ENCODE measurements at regions of chr19 and their contacts with region 1.

Region 1: GRCh38 chr19:29694669-29695627 is 20.1 kb downstream of the C19orf12 start:
- DNase-seq: peak; percentile 75 to 87 (median 78)
- H3K4me3 ChIP-seq: no peak overlapping the region
- H3K4me3 Mint-ChIP-seq: no peak overlapping the region
- H3K27ac ChIP-seq: no peak overlapping the region
- H3K27ac Mint-ChIP-seq: peak overlapping the region; percentile 37 to 88 (median 72)
- H3K4me1 ChIP-seq: peaks cover 13% of the 10 kb centered on the region
- H3K4me1 Mint-ChIP-seq: peaks cover 13 to 21% (median 15%) of the 10 kb centered on the region in 3 donors
- H3K27me3 ChIP-seq: no peaks in the 10 kb centered on the region
- H3K27me3 Mint-ChIP-seq: no peaks in the 10 kb centered on the region

Region 2: DNA sequence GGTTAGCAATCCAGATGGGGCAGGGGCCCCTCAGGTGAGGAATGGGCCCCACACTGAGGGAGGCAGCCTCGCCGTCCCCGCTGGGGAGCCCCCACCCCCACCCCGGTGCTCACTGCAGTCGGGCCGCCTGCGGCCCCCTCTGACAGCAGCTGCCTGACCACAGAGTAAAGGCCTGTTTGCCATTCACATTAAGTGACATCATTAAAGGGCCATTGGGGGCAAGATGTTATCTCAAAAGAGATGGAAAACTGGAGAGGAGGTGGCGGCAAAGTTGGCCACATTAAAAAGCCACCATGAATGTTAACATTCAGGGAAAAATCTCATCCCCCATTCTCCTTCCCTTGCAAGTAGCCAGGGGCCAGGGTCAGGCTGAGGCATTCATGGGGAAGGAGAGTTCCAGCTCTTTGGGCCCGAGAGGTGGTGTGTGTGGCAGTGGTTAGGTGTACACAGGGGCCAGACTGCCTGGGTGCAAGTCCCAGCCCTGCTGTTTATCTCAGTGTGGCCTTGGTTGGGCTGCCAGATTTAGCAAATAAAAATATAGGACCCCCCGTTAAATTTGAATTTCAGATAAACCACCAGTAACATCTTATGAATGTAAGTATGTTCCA is 148.3 kb before region 1 on chr19:
- CTCF ChIA-PET with region 1: no interaction called
- POLR2A ChIA-PET with region 1: no interaction called
- DNase-seq: no peak
- H3K4me3 ChIP-seq: no peak overlapping the region
- H3K4me3 Mint-ChIP-seq: no peak overlapping the region
- H3K27ac ChIP-seq: no peak overlapping the region
- H3K27ac Mint-ChIP-seq: no peak overlapping the region
- H3K4me1 ChIP-seq: no peaks in the 10 kb centered on the region
- H3K4me1 Mint-ChIP-seq: no peaks in the 10 kb centered on the region
- H3K27me3 ChIP-seq: no peaks in the 10 kb centered on the region
- H3K27me3 Mint-ChIP-seq: peaks cover 10 to 28% of the 10 kb centered on the region in 2 donors

Region 3: GRCh38 chr19:29610563-29611271 is 84.2 kb before region 1 on chr19:
- CTCF ChIA-PET with region 1: interaction called, 119 read pairs
- POLR2A ChIA-PET with region 1: interaction called, 4 read pairs
- DNase-seq: peak; percentile 74 to 91 (median 77)
- H3K4me3 ChIP-seq: no peak overlapping the region
- H3K4me3 Mint-ChIP-seq: peak overlapping the region in 4 of 7 donors; percentile 32 to 85 (median 64)
- H3K27ac ChIP-seq: no peak overlapping the region
- H3K27ac Mint-ChIP-seq: peak overlapping the region; percentile 47 to 91 (median 87)
- H3K4me1 ChIP-seq: peaks cover 23% of the 10 kb centered on the region
- H3K4me1 Mint-ChIP-seq: peaks cover 25 to 50% (median 33%) of the 10 kb centered on the region in 3 donors
- H3K27me3 ChIP-seq: no peaks in the 10 kb centered on the region
- H3K27me3 Mint-ChIP-seq: no peaks in the 10 kb centered on the region

Region 4: DNA sequence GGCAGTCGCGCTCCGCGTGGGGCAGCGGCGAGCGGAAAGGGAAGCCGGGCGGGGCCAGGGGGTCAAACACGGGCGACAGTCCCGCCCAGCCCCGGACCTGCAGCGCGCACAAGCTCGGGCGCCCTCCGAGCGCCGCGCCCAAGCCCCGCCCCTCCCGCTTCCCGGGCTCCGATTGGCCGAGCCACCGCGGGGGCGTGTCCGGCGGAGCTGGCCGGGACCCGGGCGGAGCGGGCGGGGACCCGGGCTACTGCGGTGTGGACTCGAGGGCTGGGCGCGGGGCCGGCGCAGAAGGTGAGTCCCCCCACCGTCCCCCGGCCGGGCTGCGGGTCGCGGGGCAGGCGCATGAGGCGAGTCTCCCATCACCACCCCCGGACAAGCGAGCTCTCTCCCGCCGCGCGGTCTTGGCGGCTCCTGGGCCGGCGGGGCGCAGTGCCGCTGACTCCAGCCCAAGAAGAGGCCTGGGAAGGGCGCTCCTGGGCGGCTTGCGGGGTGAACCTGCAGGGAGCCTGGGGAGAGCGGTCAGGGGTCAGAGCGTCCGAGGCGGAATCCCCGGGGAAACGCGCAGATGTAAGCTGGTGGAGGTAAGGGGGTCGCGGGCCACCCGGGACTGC is 29.6 kb before region 1 on chr19 and contains the start of gene PLEKHF1:
- CTCF ChIA-PET with region 1: interaction called, 48 read pairs
- POLR2A ChIA-PET with region 1: interaction called, 3 read pairs
- DNase-seq: peak; percentile 81 to 85 (median 82)
- H3K4me3 ChIP-seq: peak within 1 kb of the TSS; percentile 91
- H3K4me3 Mint-ChIP-seq: peak within 1 kb of the TSS; percentile 88 to 98 (median 93)
- H3K27ac ChIP-seq: peak within 1 kb of the TSS; percentile 69
- H3K27ac Mint-ChIP-seq: peak within 1 kb of the TSS; percentile 89 to 100 (median 98)
- H3K4me1 ChIP-seq: peaks cover 50% of the 10 kb centered on the region
- H3K4me1 Mint-ChIP-seq: peaks cover 37 to 43% (median 42%) of the 10 kb centered on the region in 3 donors
- H3K27me3 ChIP-seq: no peaks in the 10 kb centered on the region
- H3K27me3 Mint-ChIP-seq: no peaks in the 10 kb centered on the region
- total RNA-seq, gene PLEKHF1: 21.3 to 23.0 TPM

Region 5: GRCh38 chr19:29680447-29680846 is 14.5 kb before region 1 on chr19:
- CTCF ChIA-PET with region 1: interaction called, 14 read pairs
- POLR2A ChIA-PET with region 1: interaction called, 3 read pairs
- DNase-seq: peak; percentile 79 to 90 (median 86)
- H3K4me3 ChIP-seq: peak overlapping the region; percentile 50
- H3K4me3 Mint-ChIP-seq: peak overlapping the region; percentile 26 to 83 (median 78)
- H3K27ac ChIP-seq: peak overlapping the region; percentile 25
- H3K27ac Mint-ChIP-seq: peak overlapping the region; percentile 81 to 97 (median 94)
- H3K4me1 ChIP-seq: peaks cover 73% of the 10 kb centered on the region
- H3K4me1 Mint-ChIP-seq: peaks cover 64 to 81% (median 75%) of the 10 kb centered on the region in 3 donors
- H3K27me3 ChIP-seq: no peaks in the 10 kb centered on the region
- H3K27me3 Mint-ChIP-seq: no peaks in the 10 kb centered on the region

Region 6: GRCh38 chr19:29724102-29724641 is 29.2 kb after region 1 on chr19:
- CTCF ChIA-PET with region 1: interaction called, 11 read pairs
- POLR2A ChIA-PET with region 1: no interaction called
- DNase-seq: peak in 1 of 5 donors; percentile 52
- H3K4me3 ChIP-seq: no peak overlapping the region
- H3K4me3 Mint-ChIP-seq: peak overlapping the region; percentile 38 to 83 (median 68)
- H3K27ac ChIP-seq: no peak overlapping the region
- H3K27ac Mint-ChIP-seq: peak overlapping the region in 2 of 8 donors; percentile 11 to 23
- H3K4me1 ChIP-seq: no peaks in the 10 kb centered on the region
- H3K4me1 Mint-ChIP-seq: peaks cover 6 to 17% (median 12%) of the 10 kb centered on the region in 3 donors
- H3K27me3 ChIP-seq: peaks cover 7% of the 10 kb centered on the region
- H3K27me3 Mint-ChIP-seq: peaks cover 17 to 27% of the 10 kb centered on the region in 2 donors

Region 7: DNA sequence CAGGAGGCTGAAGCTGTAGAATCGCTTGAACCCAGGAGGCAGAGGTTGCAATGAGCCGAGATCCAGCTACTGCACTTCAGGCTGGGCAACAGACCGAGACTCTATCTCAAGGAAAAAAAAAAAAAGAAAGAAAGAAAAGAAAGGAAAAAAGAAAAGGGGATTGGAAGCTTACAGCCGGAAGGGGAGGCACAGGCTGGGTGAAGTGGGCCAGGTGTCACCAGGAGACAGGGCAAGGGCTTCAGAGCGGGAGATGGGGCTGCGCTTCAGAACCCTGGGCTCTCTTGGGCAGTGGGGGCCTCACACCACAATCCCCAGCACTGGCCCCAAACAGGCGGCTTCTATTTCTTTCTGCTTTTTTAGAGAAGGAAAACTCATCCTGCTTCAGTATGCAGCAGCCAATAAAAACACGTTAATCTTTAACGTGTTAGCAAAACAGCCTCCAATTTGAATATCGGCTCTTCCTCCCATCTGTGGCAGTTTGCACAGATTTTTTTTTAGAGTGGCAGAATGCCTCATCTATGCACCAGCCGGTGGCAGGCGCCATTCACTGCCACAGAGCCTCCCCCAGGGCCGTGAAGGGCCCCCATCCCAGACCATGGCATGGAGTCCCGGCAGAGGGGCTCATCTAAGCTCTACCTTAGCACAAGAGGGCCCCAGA is 66.8 kb after region 1 on chr19:
- CTCF ChIA-PET with region 1: no interaction called
- POLR2A ChIA-PET with region 1: no interaction called
- DNase-seq: no peak
- H3K4me3 ChIP-seq: no peak overlapping the region
- H3K4me3 Mint-ChIP-seq: no peak overlapping the region
- H3K27ac ChIP-seq: no peak overlapping the region
- H3K27ac Mint-ChIP-seq: no peak overlapping the region
- H3K4me1 ChIP-seq: no peaks in the 10 kb centered on the region
- H3K4me1 Mint-ChIP-seq: peaks cover 0 to 2% (median 0%) of the 10 kb centered on the region in 3 donors
- H3K27me3 ChIP-seq: no peaks in the 10 kb centered on the region
- H3K27me3 Mint-ChIP-seq: peaks cover 3 to 4% of the 10 kb centered on the region in 2 donors

Region 8: DNA sequence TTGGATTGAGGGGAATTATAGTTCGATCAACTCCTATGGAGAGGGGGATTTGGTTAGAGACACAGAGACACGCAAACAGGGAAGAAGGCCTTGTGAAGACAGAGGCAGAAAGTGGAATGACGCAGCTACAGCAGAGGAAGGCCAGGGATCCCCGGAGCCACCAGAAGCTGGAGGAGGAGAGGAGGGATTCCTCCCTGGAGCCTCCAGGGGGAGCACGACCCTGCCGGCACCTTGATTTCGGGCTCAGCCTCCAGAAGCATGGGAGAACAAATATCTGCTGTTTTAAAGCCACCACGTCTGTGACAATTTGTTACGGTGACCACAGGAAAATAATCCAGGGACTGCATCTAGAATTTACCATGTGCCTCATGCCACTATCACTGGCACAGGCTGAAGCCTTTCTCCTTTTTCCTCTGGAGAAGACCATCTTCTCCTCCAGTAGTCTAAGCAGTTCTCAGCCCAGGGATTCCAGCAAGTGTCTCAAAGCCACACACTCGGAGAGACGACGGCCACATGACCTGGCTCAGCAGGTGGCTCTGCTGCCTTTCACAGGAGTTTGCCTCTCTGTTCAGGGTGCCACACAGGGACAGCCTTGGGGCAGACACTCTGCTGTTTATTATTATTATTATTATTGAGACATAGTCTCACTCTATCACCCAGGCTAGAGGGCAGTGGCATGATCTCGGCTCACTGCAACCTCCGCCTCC is 76.9 kb after region 1 on chr19:
- CTCF ChIA-PET with region 1: no interaction called
- POLR2A ChIA-PET with region 1: no interaction called
- DNase-seq: peak in 1 of 5 donors; percentile 23
- H3K4me3 ChIP-seq: no peak overlapping the region
- H3K4me3 Mint-ChIP-seq: no peak overlapping the region
- H3K27ac ChIP-seq: no peak overlapping the region
- H3K27ac Mint-ChIP-seq: peak overlapping the region in 1 of 8 donors; percentile 43
- H3K4me1 ChIP-seq: no peaks in the 10 kb centered on the region
- H3K4me1 Mint-ChIP-seq: peaks cover 0 to 6% (median 0%) of the 10 kb centered on the region in 3 donors
- H3K27me3 ChIP-seq: no peaks in the 10 kb centered on the region
- H3K27me3 Mint-ChIP-seq: peaks cover 0 to 13% of the 10 kb centered on the region in 2 donors